Right cardiac atrium (tissue), 5 donors: ENCODE measurements at regions of chrX and their contacts with region 1.

Region 1: GRCh38 chrX:34300871-34301270 is 168.8 kb upstream of the FAM47A start:
- DNase-seq: no peak
- ATAC-seq: no peak
- H3K4me3 ChIP-seq: no peak overlapping the region
- H3K27ac ChIP-seq: no peak overlapping the region
- H3K4me1 ChIP-seq: no peaks in the 10 kb centered on the region
- H3K27me3 ChIP-seq: no peaks in the 10 kb centered on the region

Region 2: GRCh38 chrX:33434256-33435092 is 866.4 kb before region 1 on chrX:
- intact Hi-C with region 1: loop called in 2 of 4 experiments (anchors 5 to 10 kb)
- DNase-seq: peak; percentile 35 to 53 (median 45)
- ATAC-seq: peak in 1 of 2 donors; percentile 40
- H3K4me3 ChIP-seq: no peak overlapping the region
- H3K27ac ChIP-seq: no peak overlapping the region
- H3K4me1 ChIP-seq: no peaks in the 10 kb centered on the region
- H3K27me3 ChIP-seq: no peaks in the 10 kb centered on the region

Region 3: GRCh38 chrX:34058005-34058404 is 242.9 kb before region 1 on chrX:
- intact Hi-C with region 1: no loop called
- DNase-seq: no peak
- ATAC-seq: no peak
- H3K4me3 ChIP-seq: no peak overlapping the region
- H3K27ac ChIP-seq: no peak overlapping the region
- H3K4me1 ChIP-seq: no peaks in the 10 kb centered on the region
- H3K27me3 ChIP-seq: no peaks in the 10 kb centered on the region

Region 4: GRCh38 chrX:34350561-34351335 is 49.9 kb after region 1 on chrX:
- intact Hi-C with region 1: no loop called
- DNase-seq: no peak
- ATAC-seq: no peak
- H3K4me3 ChIP-seq: no peak overlapping the region
- H3K27ac ChIP-seq: no peak overlapping the region
- H3K4me1 ChIP-seq: no peaks in the 10 kb centered on the region
- H3K27me3 ChIP-seq: no peaks in the 10 kb centered on the region